HepG2 (cell line): ENCODE measurements at regions of chr1 and their contacts with region 1.

Region 1: GRCh38 chr1:2586154-2587070 is at the start of gene PRXL2B:
- DNase-seq: peak; percentile 94
- ATAC-seq: peak; percentile 90
- H3K4me3 ChIP-seq: peak within 1 kb of the TSS; percentile 79 to 95 (median 90)
- H3K27ac ChIP-seq: peak within 1 kb of the TSS; percentile 86
- H3K4me1 ChIP-seq: peaks cover 46% of the 10 kb centered on the region
- H3K27me3 ChIP-seq: no peaks in the 10 kb centered on the region
- CTCF ChIP-seq: no peak
- EP300 ChIP-seq: no peak
- POLR2A ChIP-seq: 0 out of 4 replicates have a peak, but pooled peaks of 1 of the 2 experiments have one; percentile 38
- RAD21 ChIP-seq: 0 out of 2 replicates have a peak, but pooled peaks have one; percentile 20
- total RNA-seq, gene PRXL2B: 14.1 and 16.8 TPM in 2 replicates

Region 2: GRCh38 chr1:2545759-2546514 is 40.5 kb before region 1 on chr1:
- CTCF ChIA-PET with region 1: no interaction called
- POLR2A ChIA-PET with region 1: interaction called, 21 read pairs
- in situ Hi-C with region 1: no loop called
- intact Hi-C with region 1: no loop called
- DNase-seq: peak; percentile 87
- ATAC-seq: peak; percentile 62
- H3K4me3 ChIP-seq: peak overlapping the region; percentile 61 to 80 (median 64)
- H3K27ac ChIP-seq: peak overlapping the region; percentile 51
- H3K4me1 ChIP-seq: peaks cover 77% of the 10 kb centered on the region
- H3K27me3 ChIP-seq: peaks cover 4 to 6% of the 10 kb centered on the region in 2 experiments; a peak in 2 of 5 replicates
- CTCF ChIP-seq: no peak
- EP300 ChIP-seq: no peak
- POLR2A ChIP-seq: peak in 1 of 2 experiments; percentile 54; a peak in 2 of 4 replicates
- RAD21 ChIP-seq: no peak

Region 3: GRCh38 chr1:2605509-2606395 is 19.3 kb after region 1 on chr1:
- CTCF ChIA-PET with region 1: no interaction called
- POLR2A ChIA-PET with region 1: no interaction called
- in situ Hi-C with region 1: no loop called
- intact Hi-C with region 1: no loop called
- DNase-seq: no peak
- ATAC-seq: no peak
- H3K4me3 ChIP-seq: no peak overlapping the region
- H3K27ac ChIP-seq: no peak overlapping the region
- H3K4me1 ChIP-seq: no peaks in the 10 kb centered on the region
- H3K27me3 ChIP-seq: peaks cover 13 to 73% of the 10 kb centered on the region in 2 experiments; a peak in 4 of 5 replicates
- CTCF ChIP-seq: no peak
- EP300 ChIP-seq: no peak
- POLR2A ChIP-seq: no peak
- RAD21 ChIP-seq: no peak

Region 4: GRCh38 chr1:2632561-2633361 is 46.3 kb after region 1 on chr1 and contains the start of gene MMEL1:
- CTCF ChIA-PET with region 1: no interaction called
- POLR2A ChIA-PET with region 1: interaction called, 11 read pairs
- in situ Hi-C with region 1: no loop called
- intact Hi-C with region 1: loop called (anchors 10 kb)
- DNase-seq: no peak
- ATAC-seq: peak; percentile 21; the same call in 2 of the 3 replicates
- H3K4me3 ChIP-seq: peak within 1 kb of the TSS in 1 of 3 experiments; percentile 42; a peak in 1 of 6 replicates
- H3K27ac ChIP-seq: no peak within 1 kb of the TSS
- H3K4me1 ChIP-seq: peaks cover 40% of the 10 kb centered on the region
- H3K27me3 ChIP-seq: peaks cover 11 to 24% of the 10 kb centered on the region in 2 experiments; a peak in 4 of 5 replicates
- CTCF ChIP-seq: no peak
- EP300 ChIP-seq: no peak
- POLR2A ChIP-seq: no peak
- RAD21 ChIP-seq: no peak
- total RNA-seq, gene MMEL1: not detected in 2 replicates